ENCODE measurements at regions of chr20 and their contacts with region 1.

Region 1: GRCh38 chr20:407133-407952 is 756 bp upstream of the RBCK1 start:
- DNase-seq: peak; percentile 13 to 88 (median 62)
- ATAC-seq: peak; percentile 73
- H3K4me3 ChIP-seq: peak overlapping the region; percentile 97
- H3K4me3 Mint-ChIP-seq: peak overlapping the region; percentile 95
- H3K27ac ChIP-seq: peak overlapping the region; percentile 40 to 45
- H3K27ac Mint-ChIP-seq: peak overlapping the region; percentile 88
- H3K4me1 ChIP-seq: peaks cover 36% of the 10 kb centered on the region
- H3K4me1 Mint-ChIP-seq: peaks cover 51% of the 10 kb centered on the region
- H3K27me3 ChIP-seq: no peaks in the 10 kb centered on the region
- H3K27me3 Mint-ChIP-seq: no peaks in the 10 kb centered on the region
- CTCF ChIP-seq: peak; percentile 37

Region 2: DNA sequence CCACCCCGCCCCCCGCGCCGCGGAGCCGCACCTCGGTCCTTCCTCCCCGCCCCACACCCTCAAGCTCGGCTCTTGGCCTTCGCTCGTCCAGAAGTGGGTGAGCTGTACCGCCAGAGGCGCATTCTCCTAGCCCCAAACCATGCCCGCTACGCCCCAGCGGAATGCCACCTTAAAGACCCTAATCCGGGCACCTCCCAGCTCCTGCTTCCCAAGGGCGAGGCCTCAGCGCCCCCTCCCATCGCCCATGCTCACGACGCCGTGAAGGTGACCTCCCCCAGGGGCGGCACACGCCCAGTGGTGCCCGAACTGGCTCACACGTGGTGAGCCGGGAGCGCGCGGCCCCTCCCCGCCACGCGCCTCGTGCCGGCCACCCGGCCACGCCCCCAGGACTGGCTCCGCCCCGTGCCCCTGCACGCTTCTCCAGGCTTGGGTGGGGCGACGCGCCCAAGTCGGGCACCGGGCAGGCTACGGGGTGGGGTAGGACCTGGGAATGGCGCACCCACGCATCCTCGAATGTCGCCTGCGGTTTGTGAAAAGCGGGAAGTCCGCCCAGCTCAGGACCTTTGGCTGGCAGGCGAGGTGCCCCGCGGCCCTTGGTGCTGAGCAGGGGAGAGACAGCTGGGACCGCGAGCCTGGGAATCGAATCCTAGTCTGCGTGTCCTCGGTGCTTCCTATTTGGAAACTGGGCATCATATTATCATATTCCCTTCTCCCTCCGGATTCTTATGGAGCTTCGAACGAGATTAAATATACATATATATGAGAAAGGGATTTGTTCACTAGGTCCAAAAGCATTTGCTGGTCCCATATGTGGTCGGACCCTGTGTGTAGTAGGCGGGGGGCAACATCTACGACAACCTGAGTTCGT is 82.9 kb before region 1 on chr20:
- CTCF ChIA-PET with region 1: interaction called, 4 read pairs
- POLR2A ChIA-PET with region 1: no interaction called
- intact Hi-C with region 1: loop called in 1 of 2 experiments (anchors 5 kb)
- DNase-seq: peak; percentile 76 to 96 (median 88)
- ATAC-seq: peak; percentile 54
- H3K4me3 ChIP-seq: peak overlapping the region; percentile 78
- H3K4me3 Mint-ChIP-seq: peak overlapping the region; percentile 97
- H3K27ac ChIP-seq: peak overlapping the region; percentile 55 to 75
- H3K27ac Mint-ChIP-seq: peak overlapping the region; percentile 97
- H3K4me1 ChIP-seq: peaks cover 32% of the 10 kb centered on the region
- H3K4me1 Mint-ChIP-seq: peaks cover 24% of the 10 kb centered on the region
- H3K27me3 ChIP-seq: no peaks in the 10 kb centered on the region
- H3K27me3 Mint-ChIP-seq: no peaks in the 10 kb centered on the region
- CTCF ChIP-seq: peak; percentile 25

Region 3: DNA sequence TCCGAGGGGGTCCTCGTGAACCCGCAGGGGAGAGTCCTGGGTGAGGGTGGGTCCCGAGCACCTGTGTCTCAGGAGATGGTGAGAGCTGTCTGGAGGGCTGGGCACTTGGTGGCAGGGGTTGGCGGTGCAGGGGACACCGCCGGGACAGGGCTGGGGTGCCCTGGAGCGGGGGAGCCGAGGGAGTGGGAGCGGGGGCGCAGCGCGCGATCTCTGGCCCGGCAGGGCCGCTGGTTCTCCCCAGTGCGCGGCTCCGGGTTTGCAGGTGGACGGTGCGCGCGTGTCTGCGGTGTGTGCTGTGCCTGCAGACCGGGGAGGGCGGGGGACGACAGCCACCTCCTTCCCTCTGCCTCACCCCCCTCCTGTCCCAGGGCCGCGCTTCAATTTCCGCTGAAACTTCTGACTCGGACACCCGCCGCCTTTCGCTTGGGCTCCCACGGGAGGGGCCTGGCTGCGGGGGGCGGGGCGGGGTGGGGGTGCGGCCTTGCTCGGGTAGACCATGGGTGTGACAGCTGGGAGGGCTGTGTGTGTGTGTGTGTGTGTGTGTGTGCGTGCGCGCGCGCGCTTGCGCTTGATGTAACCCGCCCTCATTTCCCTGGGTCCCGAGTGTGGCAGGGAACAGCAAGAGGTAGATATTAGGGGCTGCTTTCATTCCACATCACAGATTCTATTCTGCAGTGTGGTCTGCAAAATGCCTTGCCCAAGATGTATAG is 25.6 kb before region 1 on chr20:
- CTCF ChIA-PET with region 1: interaction called, 4 read pairs
- POLR2A ChIA-PET with region 1: interaction called, 24 read pairs
- intact Hi-C with region 1: loop called in 1 of 2 experiments (anchors 2 kb)
- DNase-seq: peak; percentile 41 to 87 (median 67)
- ATAC-seq: peak; percentile 70
- H3K4me3 ChIP-seq: peak overlapping the region; percentile 71
- H3K4me3 Mint-ChIP-seq: peak overlapping the region; percentile 86
- H3K27ac ChIP-seq: peak overlapping the region; percentile 2 to 46
- H3K27ac Mint-ChIP-seq: peak overlapping the region; percentile 75
- H3K4me1 ChIP-seq: peaks cover 17% of the 10 kb centered on the region
- H3K4me1 Mint-ChIP-seq: peaks cover 16% of the 10 kb centered on the region
- H3K27me3 ChIP-seq: no peaks in the 10 kb centered on the region
- H3K27me3 Mint-ChIP-seq: no peaks in the 10 kb centered on the region
- CTCF ChIP-seq: no peak

Region 4: DNA sequence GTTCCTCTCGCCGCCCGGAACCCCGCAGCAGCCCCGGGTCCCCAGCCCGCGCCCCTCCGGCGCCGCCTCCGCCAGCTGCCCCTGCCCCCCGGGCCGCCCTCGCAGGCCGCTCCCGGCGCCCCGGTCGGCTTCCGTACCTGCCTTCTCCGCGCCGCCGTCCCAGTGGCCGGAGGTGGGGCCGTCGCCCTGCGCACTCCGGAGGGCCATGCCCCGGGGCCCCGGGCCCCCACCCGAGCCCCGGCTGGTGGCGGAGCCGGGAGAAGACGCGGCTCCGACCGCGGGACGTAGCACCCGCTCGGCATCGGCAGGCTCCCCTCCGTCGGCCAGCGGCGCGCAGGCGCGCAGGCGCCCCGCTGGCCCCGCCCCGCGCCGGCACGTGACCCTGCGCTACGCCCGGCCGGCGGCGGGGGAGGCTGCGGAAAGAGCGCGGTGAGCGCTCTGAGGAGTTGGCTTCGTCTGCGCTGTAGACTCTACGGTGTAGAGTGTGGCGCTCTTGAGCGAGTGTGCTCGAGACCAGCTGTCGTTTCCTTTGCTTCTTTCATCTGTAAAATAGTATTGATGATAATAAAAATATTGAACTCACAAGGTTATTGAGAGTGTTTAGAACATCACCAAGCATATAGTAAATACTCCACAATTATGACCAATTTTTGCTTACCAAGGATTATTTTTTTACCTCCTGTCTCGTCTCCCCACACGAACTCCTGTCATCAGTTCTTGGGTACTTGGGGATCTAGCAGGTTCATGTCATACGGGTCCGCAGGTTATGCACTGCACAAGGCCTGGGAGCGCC is 55.1 kb after region 1 on chr20 and contains the start of gene TBC1D20:
- CTCF ChIA-PET with region 1: interaction called, 5 read pairs
- POLR2A ChIA-PET with region 1: interaction called, 24 read pairs
- intact Hi-C with region 1: loop called (anchors 1 kb)
- DNase-seq: peak; percentile 72 to 95 (median 85)
- ATAC-seq: peak; percentile 97
- H3K4me3 ChIP-seq: peak within 1 kb of the TSS; percentile 90
- H3K4me3 Mint-ChIP-seq: peak within 1 kb of the TSS; percentile 98
- H3K27ac ChIP-seq: peak within 1 kb of the TSS; percentile 59 to 67
- H3K27ac Mint-ChIP-seq: peak within 1 kb of the TSS; percentile 90
- H3K4me1 ChIP-seq: peaks cover 34% of the 10 kb centered on the region
- H3K4me1 Mint-ChIP-seq: peaks cover 53% of the 10 kb centered on the region
- H3K27me3 ChIP-seq: no peaks in the 10 kb centered on the region
- H3K27me3 Mint-ChIP-seq: no peaks in the 10 kb centered on the region
- CTCF ChIP-seq: peak; percentile 20
- total RNA-seq, gene TBC1D20: 15.7 to 16.1 TPM

Region 5: GRCh38 chr20:543369-544152 is 136.2 kb after region 1 on chr20 and contains the start of gene CSNK2A1:
- CTCF ChIA-PET with region 1: no interaction called
- POLR2A ChIA-PET with region 1: interaction called, 11 read pairs
- intact Hi-C with region 1: loop called in 1 of 2 experiments (anchors 2 kb)
- DNase-seq: peak; percentile 91 to 98 (median 96)
- ATAC-seq: peak; percentile 91
- H3K4me3 ChIP-seq: peak within 1 kb of the TSS; percentile 88
- H3K4me3 Mint-ChIP-seq: peak within 1 kb of the TSS; percentile 100
- H3K27ac ChIP-seq: peak within 1 kb of the TSS; percentile 83 to 98
- H3K27ac Mint-ChIP-seq: peak within 1 kb of the TSS; percentile 99
- H3K4me1 ChIP-seq: peaks cover 32% of the 10 kb centered on the region
- H3K4me1 Mint-ChIP-seq: peaks cover 54% of the 10 kb centered on the region
- H3K27me3 ChIP-seq: no peaks in the 10 kb centered on the region
- H3K27me3 Mint-ChIP-seq: peaks cover 12% of the 10 kb centered on the region
- CTCF ChIP-seq: no peak
- total RNA-seq, gene CSNK2A1: 55.5 to 56.9 TPM